HepG2 (cell line): ENCODE measurements at regions of chr17 and their contacts with region 1.

Region 1: GRCh38 chr17:21119247-21119918 is 7.4 kb upstream of the DHRS7B start:
- DNase-seq: peak; percentile 53
- ATAC-seq: peak; percentile 69
- H3K4me3 ChIP-seq: no peak overlapping the region
- H3K27ac ChIP-seq: no peak overlapping the region
- H3K4me1 ChIP-seq: peaks cover 24% of the 10 kb centered on the region
- H3K27me3 ChIP-seq: no peaks in the 10 kb centered on the region; a peak in 1 of 5 replicates
- CTCF ChIP-seq: peak; percentile 84
- EP300 ChIP-seq: no peak
- POLR2A ChIP-seq: no peak
- RAD21 ChIP-seq: peak; percentile 44; the same call in 1 of the 2 replicates

Region 2: GRCh38 chr17:21171309-21171922 is 52.0 kb after region 1 on chr17:
- CTCF ChIA-PET with region 1: no interaction called
- POLR2A ChIA-PET with region 1: no interaction called
- in situ Hi-C with region 1: no loop called
- intact Hi-C with region 1: no loop called
- DNase-seq: no peak
- ATAC-seq: no peak
- H3K4me3 ChIP-seq: no peak overlapping the region
- H3K27ac ChIP-seq: no peak overlapping the region
- H3K4me1 ChIP-seq: peaks cover 12% of the 10 kb centered on the region; the same call in 1 of the 2 replicates
- H3K27me3 ChIP-seq: no peaks in the 10 kb centered on the region
- CTCF ChIP-seq: no peak
- EP300 ChIP-seq: no peak
- POLR2A ChIP-seq: no peak
- RAD21 ChIP-seq: no peak

Region 3: DNA sequence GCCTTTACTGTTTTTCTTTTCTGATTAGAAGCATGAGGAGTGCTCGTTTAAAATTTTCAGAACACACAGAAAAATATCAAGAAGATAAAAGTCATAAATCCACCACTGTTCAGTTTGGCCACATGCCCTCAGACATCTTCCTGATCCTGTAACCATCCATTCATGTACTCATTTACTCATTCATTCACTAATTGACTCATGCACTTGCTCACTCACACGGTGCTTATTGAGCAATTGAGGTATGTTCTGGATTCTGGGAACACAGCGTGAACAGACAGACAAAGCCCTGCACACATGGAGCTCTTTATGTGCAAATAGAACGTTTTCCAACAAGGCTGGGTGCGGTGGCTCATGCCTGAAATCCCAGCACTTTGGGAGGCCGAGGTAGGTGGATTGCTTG is 144.0 kb after region 1 on chr17:
- CTCF ChIA-PET with region 1: no interaction called
- POLR2A ChIA-PET with region 1: no interaction called
- in situ Hi-C with region 1: no loop called
- intact Hi-C with region 1: no loop called
- DNase-seq: no peak
- ATAC-seq: no peak
- H3K4me3 ChIP-seq: no peak overlapping the region
- H3K27ac ChIP-seq: no peak overlapping the region
- H3K4me1 ChIP-seq: no peaks in the 10 kb centered on the region
- H3K27me3 ChIP-seq: peaks cover 0 to 2% of the 10 kb centered on the region in 2 experiments; a peak in 2 of 5 replicates
- CTCF ChIP-seq: no peak
- EP300 ChIP-seq: no peak
- POLR2A ChIP-seq: no peak
- RAD21 ChIP-seq: no peak

Region 4: DNA sequence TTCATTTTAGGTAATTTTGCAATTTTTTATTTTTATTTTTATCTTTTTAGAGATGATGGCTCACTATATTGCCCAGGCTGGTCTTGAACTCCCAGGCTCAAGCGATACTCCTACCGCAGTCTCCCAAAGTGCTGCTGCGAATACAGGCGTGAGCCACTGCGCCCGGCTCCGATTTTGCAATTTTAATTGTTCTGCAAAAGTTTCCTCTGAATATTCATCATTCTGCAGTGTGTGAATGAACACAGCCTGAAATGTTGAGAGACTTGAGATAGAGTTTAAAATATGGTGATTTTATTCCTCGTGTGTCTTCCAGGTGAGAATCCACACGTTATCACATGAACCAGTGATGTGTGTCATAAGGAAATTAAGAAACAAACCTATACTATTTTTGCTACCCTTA is 332.6 kb after region 1 on chr17:
- CTCF ChIA-PET with region 1: no interaction called
- POLR2A ChIA-PET with region 1: no interaction called
- in situ Hi-C with region 1: no loop called
- intact Hi-C with region 1: loop called (anchors 2 kb)
- DNase-seq: no peak
- ATAC-seq: no peak
- H3K4me3 ChIP-seq: no peak overlapping the region
- H3K27ac ChIP-seq: no peak overlapping the region
- H3K4me1 ChIP-seq: peaks cover 5% of the 10 kb centered on the region; the same call in 1 of the 2 replicates
- H3K27me3 ChIP-seq: peaks cover 1 to 14% of the 10 kb centered on the region in 2 experiments; a peak in 3 of 5 replicates
- CTCF ChIP-seq: no peak
- EP300 ChIP-seq: no peak
- POLR2A ChIP-seq: no peak
- RAD21 ChIP-seq: no peak